ENCODE measurements at regions of chr21 and their contacts with region 1.

Region 1: GRCh38 chr21:17476006-17476405 is 36.8 kb upstream of the CXADR start:
- DNase-seq: no peak
- ATAC-seq: peak; percentile 56

Region 2: GRCh38 chr21:17523007-17523451 is 47.0 kb after region 1 on chr21:
- intact Hi-C with region 1: no loop called
- DNase-seq: no peak
- ATAC-seq: no peak

Region 3: DNA sequence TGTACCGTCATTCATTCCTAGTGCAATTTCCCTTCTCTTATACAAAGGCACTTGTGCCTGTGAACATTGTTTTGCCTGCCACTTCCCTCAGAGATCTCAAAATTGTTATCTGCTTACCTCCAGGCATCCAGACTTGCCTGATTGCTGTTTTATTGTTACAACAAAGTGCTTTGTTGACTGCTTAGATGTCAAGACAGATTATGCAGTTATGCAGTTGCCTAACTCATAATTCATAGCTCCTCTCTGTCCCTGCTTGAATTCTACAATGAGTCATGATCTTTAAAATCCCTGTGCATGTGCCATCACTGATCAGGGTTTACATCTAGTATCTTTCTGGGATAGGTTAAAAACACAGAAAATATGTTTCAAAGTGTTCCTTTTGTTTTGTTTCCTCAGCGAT is 61.3 kb after region 1 on chr21:
- intact Hi-C with region 1: loop called (anchors 10 kb)
- DNase-seq: no peak
- ATAC-seq: no peak